GM23248 (cell line): ENCODE measurements at regions of chr22 and their contacts with region 1.

Region 1: GRCh38 chr22:22207845-22208564 is 36.6 kb upstream of the VPREB1 start:
- DNase-seq: peak; percentile 84
- H3K4me3 ChIP-seq: no peak overlapping the region
- H3K27ac ChIP-seq: no peak overlapping the region
- H3K4me1 ChIP-seq: peaks cover 10% of the 10 kb centered on the region
- H3K27me3 ChIP-seq: peaks cover 28% of the 10 kb centered on the region

Region 2: DNA sequence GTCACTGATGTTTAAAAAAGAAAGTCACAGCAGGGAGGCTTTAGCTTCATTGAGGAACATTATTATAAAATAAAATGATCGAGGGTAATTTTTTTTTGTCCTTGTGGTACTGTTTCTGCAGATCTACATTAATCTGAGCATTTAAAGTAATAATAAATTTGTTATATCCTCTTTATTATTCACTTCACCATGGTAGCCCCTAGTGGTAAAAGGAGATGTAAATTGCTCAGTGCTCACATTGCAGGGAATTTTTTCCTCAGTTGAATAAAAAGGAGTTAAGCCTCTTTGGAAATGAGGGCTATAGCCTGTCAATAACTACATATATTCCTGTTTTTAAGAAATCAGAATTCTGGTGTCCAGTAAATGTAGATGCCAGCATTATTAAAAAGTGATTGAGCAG is 63.1 kb before region 1 on chr22:
- in situ Hi-C with region 1: loop called (anchors 10 kb)
- DNase-seq: peak; percentile 11
- H3K4me3 ChIP-seq: no peak overlapping the region
- H3K27ac ChIP-seq: no peak overlapping the region
- H3K4me1 ChIP-seq: no peaks in the 10 kb centered on the region
- H3K27me3 ChIP-seq: peaks cover 79% of the 10 kb centered on the region

Region 3: GRCh38 chr22:22520020-22520656 is 312.1 kb after region 1 on chr22 and contains the start of gene ZNF280A:
- in situ Hi-C with region 1: no loop called
- DNase-seq: peak; percentile 12
- H3K4me3 ChIP-seq: no peak within 1 kb of the TSS
- H3K27ac ChIP-seq: no peak within 1 kb of the TSS
- H3K4me1 ChIP-seq: no peaks in the 10 kb centered on the region
- H3K27me3 ChIP-seq: peaks cover 11% of the 10 kb centered on the region
- total RNA-seq, gene ZNF280A: not detected in 2 replicates